Thyroid gland (tissue), 4 donors: ENCODE measurements at regions of chr9 and their contacts with region 1.

Region 1: DNA sequence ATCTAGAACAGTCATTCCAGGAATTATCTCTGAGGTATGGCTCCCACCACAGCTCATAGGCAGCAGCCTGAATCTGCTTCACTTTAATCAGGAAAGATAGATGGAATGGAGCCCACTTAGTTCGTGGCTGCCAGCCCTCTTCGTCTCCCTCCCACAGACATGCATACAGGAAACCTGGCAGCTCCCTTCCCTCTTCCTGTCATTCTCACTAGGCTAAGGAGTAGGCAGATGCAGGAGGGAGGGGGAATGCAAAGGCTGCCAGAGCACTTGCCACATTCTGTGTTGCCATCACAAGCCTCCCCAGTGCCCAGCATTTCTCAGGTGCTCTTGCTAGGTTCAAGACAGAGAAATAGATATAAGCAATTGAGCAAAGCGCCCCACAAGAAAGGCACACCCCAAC is 378.9 kb downstream of the ELAVL2 start:
- DNase-seq: no peak
- H3K4me3 ChIP-seq: no peak overlapping the region
- H3K27ac ChIP-seq: no peak overlapping the region
- H3K4me1 ChIP-seq: no peaks in the 10 kb centered on the region
- H3K27me3 ChIP-seq: no peaks in the 10 kb centered on the region
- CTCF ChIP-seq: no peak
- POLR2A ChIP-seq: no peak

Region 2: GRCh38 chr9:23357651-23358050 is 89.5 kb before region 1 on chr9:
- intact Hi-C with region 1: no loop called
- DNase-seq: no peak
- H3K4me3 ChIP-seq: no peak overlapping the region
- H3K27ac ChIP-seq: no peak overlapping the region
- H3K4me1 ChIP-seq: no peaks in the 10 kb centered on the region
- H3K27me3 ChIP-seq: no peaks in the 10 kb centered on the region
- CTCF ChIP-seq: no peak
- POLR2A ChIP-seq: no peak

Region 3: DNA sequence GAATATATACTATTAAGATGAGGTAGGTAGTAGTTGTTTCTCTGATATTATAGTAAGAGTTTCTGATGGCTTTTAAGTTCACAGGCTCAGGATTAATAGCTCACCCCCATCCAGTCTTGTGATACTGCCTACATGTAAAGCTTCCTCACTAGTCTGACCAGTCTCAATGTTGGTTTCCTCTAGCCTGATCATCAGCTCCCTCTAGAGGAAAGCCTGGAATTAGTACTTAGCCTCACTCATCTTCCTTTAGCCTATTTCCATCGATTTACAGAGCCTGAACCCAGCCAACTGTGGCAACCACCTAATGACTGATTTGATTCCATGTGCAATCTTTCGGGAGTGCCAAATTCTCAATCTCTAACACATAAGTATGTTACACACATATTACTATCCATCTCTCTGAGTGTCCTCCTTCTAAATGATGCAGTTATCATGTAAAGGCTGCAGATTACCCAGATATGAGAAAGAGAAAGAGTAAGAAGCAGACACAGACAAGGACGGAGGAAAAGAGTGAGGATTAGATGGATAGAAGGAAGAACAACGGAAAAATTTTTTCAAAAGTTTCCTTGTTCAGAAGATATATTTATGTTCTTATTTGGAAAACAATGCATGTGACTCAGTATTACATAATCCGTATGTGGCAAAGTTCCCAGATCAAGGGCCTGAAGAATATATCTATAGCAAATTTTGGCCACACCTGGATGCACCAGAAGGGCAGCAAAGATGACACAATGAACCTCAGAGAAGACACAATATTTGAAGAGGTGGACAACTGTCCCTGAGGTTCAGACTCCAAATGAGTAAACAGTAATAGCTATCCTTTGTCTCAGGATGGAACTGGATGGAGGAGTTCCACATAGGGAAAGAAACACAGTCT is 45.2 kb after region 1 on chr9:
- intact Hi-C with region 1: loop called (anchors 10 kb)
- DNase-seq: no peak
- H3K4me3 ChIP-seq: no peak overlapping the region
- H3K27ac ChIP-seq: no peak overlapping the region
- H3K4me1 ChIP-seq: no peaks in the 10 kb centered on the region
- H3K27me3 ChIP-seq: no peaks in the 10 kb centered on the region
- CTCF ChIP-seq: peak in 4 of 6 experiments; percentile 28 to 48 (median 32)
- POLR2A ChIP-seq: no peak

Region 4: GRCh38 chr9:23779220-23779619 is 332.1 kb after region 1 on chr9:
- intact Hi-C with region 1: no loop called
- DNase-seq: no peak
- H3K4me3 ChIP-seq: no peak overlapping the region
- H3K27ac ChIP-seq: no peak overlapping the region
- H3K4me1 ChIP-seq: no peaks in the 10 kb centered on the region
- H3K27me3 ChIP-seq: no peaks in the 10 kb centered on the region
- CTCF ChIP-seq: no peak
- POLR2A ChIP-seq: no peak